ENCODE measurements at regions of chr7 and their contacts with region 1.

Region 1: GRCh38 chr7:155356323-155357105 is 58.8 kb downstream of the INSIG1 start:
- DNase-seq: no peak
- ATAC-seq: peak in 3 of 4 donors; percentile 39 to 67 (median 47)
- H3K4me3 ChIP-seq: no peak overlapping the region
- H3K27ac ChIP-seq: no peak overlapping the region
- H3K4me1 ChIP-seq: no peaks in the 10 kb centered on the region
- H3K27me3 ChIP-seq: no peaks in the 10 kb centered on the region
- CTCF ChIP-seq: peak in 3 of 4 donors; percentile 32 to 48 (median 48)
- POLR2A ChIP-seq: no peak

Region 2: GRCh38 chr7:154903083-154903731 is 453.3 kb before region 1 on chr7:
- intact Hi-C with region 1: loop called in 1 of 2 experiments (anchors 10 kb)
- DNase-seq: no peak
- ATAC-seq: peak; percentile 60 to 96 (median 67)
- H3K4me3 ChIP-seq: no peak overlapping the region
- H3K27ac ChIP-seq: peak overlapping the region in 1 of 3 donors; percentile 60
- H3K4me1 ChIP-seq: peaks cover 0 to 14% (median 0%) of the 10 kb centered on the region in 4 donors
- H3K27me3 ChIP-seq: no peaks in the 10 kb centered on the region
- CTCF ChIP-seq: no peak
- POLR2A ChIP-seq: no peak

Region 3: GRCh38 chr7:155190688-155191087 is 165.8 kb before region 1 on chr7:
- intact Hi-C with region 1: loop called in 1 of 2 experiments (anchors 10 kb)
- DNase-seq: peak in 2 of 3 donors; percentile 59 to 67
- ATAC-seq: peak; percentile 91 to 98 (median 96)
- H3K4me3 ChIP-seq: peak overlapping the region in 2 of 3 donors; percentile 15 to 38
- H3K27ac ChIP-seq: no peak overlapping the region
- H3K4me1 ChIP-seq: peaks cover 0 to 9% (median 0%) of the 10 kb centered on the region in 4 donors
- H3K27me3 ChIP-seq: no peaks in the 10 kb centered on the region
- CTCF ChIP-seq: peak; percentile 77 to 94 (median 79)
- POLR2A ChIP-seq: no peak

Measured in right lobe of liver (tissue), 6 donors.